ENCODE measurements at regions of chr15 and their contacts with region 1.

Region 1: GRCh38 chr15:51162865-51163762 is 68.4 kb upstream of the TNFAIP8L3 start:
- H3K4me3 ChIP-seq: no peak overlapping the region
- H3K27ac ChIP-seq: no peak overlapping the region; the same call in 1 of the 2 replicates
- H3K4me1 ChIP-seq: no peaks in the 10 kb centered on the region
- CTCF ChIP-seq: peak; percentile 57

Region 2: GRCh38 chr15:51132384-51133139 is 30.6 kb before region 1 on chr15:
- CTCF ChIA-PET with region 1: interaction called, 15 read pairs
- POLR2A ChIA-PET with region 1: no interaction called
- H3K4me3 ChIP-seq: no peak overlapping the region
- H3K27ac ChIP-seq: no peak overlapping the region
- H3K4me1 ChIP-seq: no peaks in the 10 kb centered on the region
- CTCF ChIP-seq: peak; percentile 31; the same call in 1 of the 2 replicates

Region 3: DNA sequence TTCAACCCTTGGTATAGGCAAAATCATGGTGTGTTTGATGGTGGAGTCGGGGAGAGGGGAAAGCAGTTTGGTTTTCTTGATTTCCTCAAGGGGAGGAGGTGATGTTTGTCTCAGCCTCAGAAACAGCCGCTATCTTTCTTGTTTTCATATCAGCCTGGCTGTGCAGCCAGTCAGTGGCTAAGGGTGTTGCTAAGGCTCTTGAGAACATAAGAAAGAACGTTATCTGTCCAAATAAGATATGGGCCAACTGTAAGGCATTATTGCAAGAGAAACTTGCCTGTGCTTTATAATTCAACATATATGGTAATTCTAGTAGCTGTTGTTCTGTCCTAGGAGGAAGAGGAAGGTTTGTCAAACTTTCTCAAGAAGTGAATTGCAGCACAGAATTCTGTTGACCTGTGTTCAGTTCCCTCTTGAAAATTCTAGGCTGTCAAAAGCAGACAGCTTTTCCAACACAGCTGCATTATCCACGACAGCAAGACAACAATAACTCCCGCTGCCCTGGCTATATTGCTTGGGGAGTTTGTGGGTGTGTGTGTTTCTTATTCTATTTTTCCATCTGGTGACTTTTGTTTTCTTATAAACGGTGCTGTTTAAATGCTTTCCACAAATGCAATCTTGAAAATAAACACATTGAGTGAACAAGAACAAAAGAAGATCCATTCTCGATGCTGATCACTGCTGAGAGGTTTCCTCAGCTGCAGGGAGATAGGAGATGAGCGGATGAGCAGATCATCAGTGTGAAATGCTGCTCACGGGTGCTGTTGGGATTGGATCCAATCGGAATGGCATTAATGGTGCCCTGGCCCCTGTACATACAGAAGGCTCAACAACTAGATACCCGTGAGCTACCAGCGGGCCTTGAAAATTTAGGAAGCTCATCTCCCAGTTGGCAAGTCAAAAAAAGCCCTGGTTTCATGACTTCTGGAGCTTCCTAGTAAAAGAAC is 22.4 kb after region 1 on chr15:
- CTCF ChIA-PET with region 1: interaction called, 11 read pairs
- POLR2A ChIA-PET with region 1: no interaction called
- H3K4me3 ChIP-seq: no peak overlapping the region
- H3K27ac ChIP-seq: no peak overlapping the region
- H3K4me1 ChIP-seq: no peaks in the 10 kb centered on the region
- CTCF ChIP-seq: no peak

Region 4: GRCh38 chr15:51198701-51199232 is 35.7 kb after region 1 on chr15:
- CTCF ChIA-PET with region 1: interaction called, 76 read pairs
- POLR2A ChIA-PET with region 1: no interaction called
- H3K4me3 ChIP-seq: no peak overlapping the region
- H3K27ac ChIP-seq: no peak overlapping the region
- H3K4me1 ChIP-seq: no peaks in the 10 kb centered on the region
- CTCF ChIP-seq: no peak

Region 5: DNA sequence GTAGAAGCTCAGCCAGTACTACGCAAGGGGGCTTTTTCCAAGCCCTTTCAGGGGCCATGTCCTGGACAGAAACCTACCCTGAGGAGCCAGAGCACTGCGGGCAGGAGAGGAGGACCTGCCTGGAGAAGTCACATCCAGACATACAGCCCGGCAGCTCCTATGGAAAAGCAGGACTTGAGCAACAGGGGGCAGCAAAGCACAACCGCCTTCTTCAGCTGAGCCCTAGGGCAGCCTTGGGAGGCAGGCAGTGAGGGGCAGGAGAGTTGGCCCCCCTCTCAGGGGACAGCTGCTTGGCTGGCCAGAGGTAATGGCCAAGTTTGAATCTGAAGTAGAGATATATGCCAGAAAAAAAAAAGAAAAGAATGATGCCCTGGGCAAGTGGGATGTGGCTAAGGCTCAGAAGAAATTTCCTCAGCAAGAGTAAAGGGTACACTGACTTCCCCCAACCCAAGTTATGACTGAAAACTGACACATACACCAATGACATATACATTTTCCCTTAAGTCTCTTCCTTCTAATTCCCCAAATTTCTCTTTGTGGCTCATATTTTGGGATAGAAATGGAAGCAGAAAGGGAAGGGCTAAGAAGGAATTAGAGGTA is 118.4 kb after region 1 on chr15:
- CTCF ChIA-PET with region 1: interaction called, 17 read pairs
- POLR2A ChIA-PET with region 1: no interaction called
- H3K4me3 ChIP-seq: no peak overlapping the region
- H3K27ac ChIP-seq: no peak overlapping the region
- H3K4me1 ChIP-seq: no peaks in the 10 kb centered on the region
- CTCF ChIP-seq: peak; percentile 51

Region 6: DNA sequence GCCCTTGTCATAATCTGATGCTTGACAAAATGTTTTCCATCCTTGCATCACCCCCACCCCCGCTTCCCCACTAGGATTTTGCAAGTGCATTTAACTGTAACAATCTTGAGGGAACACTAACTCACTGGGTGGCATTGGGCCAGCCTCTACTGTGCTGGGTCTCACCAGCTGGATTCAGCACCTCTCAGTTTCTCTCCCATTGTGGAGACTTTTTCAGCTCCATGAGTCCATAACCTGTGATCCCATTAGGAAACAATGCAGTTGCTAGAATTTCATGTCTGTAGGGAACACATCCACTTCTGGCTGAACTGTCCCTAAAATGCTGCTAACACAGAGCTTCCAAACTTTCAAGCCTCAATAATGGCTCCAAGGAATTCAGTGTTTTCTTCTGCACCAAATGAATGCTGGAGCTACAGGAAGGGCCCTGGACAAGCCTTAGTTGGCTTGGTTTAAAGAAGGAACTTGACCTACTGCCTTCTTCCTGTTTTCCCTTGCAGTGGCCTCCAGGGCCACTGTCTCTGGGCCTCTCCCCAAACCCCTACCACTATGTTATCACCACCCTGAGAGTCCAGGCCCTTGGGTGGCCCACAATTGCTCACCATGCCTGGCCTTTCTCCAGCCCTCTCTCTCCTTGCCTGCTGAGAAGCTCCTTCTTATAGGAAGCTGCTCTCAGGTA is 159.6 kb after region 1 on chr15:
- CTCF ChIA-PET with region 1: no interaction called
- POLR2A ChIA-PET with region 1: no interaction called
- H3K4me3 ChIP-seq: no peak overlapping the region
- H3K27ac ChIP-seq: no peak overlapping the region
- H3K4me1 ChIP-seq: no peaks in the 10 kb centered on the region
- CTCF ChIP-seq: no peak

Region 7: DNA sequence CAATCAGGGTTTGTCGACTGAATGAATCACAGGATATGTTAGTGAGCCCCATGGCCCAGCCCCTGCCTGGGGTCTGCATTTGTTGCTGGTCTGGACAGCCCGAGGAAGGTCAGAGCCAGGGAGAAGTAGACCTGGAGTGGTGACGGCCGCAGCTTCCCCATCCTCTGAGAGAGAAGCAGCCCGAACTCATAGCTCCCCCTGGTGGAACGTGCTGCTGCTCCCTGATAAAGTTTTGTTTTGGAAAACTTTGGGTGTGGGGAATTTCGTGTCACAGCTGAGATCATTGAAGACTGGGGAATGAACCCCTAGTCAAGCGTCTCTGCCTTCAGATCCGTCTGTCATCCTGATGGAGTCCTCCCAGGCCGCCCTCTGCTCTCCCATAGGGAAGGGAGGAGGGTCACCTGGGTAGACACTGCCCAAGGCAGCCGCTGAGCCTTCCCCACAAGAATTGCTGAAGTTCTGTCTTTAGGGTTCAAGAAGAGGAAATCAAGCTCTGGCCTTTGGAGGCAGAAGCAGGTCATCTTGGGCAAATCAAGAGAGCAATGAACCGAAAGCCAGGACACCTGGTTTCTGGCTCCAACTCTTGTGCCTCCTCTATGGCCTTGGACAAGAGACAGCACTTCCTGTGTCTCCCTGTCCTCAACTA is 238.9 kb after region 1 on chr15:
- CTCF ChIA-PET with region 1: interaction called, 46 read pairs
- POLR2A ChIA-PET with region 1: no interaction called
- H3K4me3 ChIP-seq: no peak overlapping the region
- H3K27ac ChIP-seq: no peak overlapping the region
- H3K4me1 ChIP-seq: no peaks in the 10 kb centered on the region
- CTCF ChIP-seq: no peak